CD8-positive, alpha-beta T cell (primary cell): ENCODE measurements at regions of chr12 and their contacts with region 1.

Region 1: GRCh38 chr12:107760809-107761501 is at the start of gene PRDM4:
- DNase-seq: peak; percentile 76 to 97 (median 88)
- ATAC-seq: peak; percentile 95
- H3K4me3 ChIP-seq: peak within 1 kb of the TSS; percentile 76 to 82
- H3K4me3 Mint-ChIP-seq: peak within 1 kb of the TSS; percentile 89
- H3K27ac ChIP-seq: peak within 1 kb of the TSS; percentile 80 to 83
- H3K27ac Mint-ChIP-seq: peak within 1 kb of the TSS; percentile 90
- H3K4me1 ChIP-seq: peaks cover 31% of the 10 kb centered on the region
- H3K4me1 Mint-ChIP-seq: peaks cover 44% of the 10 kb centered on the region
- H3K27me3 ChIP-seq: no peaks in the 10 kb centered on the region
- H3K27me3 Mint-ChIP-seq: no peaks in the 10 kb centered on the region
- CTCF ChIP-seq: no peak
- total RNA-seq, gene PRDM4: 44.9 to 46.0 TPM

Region 2: DNA sequence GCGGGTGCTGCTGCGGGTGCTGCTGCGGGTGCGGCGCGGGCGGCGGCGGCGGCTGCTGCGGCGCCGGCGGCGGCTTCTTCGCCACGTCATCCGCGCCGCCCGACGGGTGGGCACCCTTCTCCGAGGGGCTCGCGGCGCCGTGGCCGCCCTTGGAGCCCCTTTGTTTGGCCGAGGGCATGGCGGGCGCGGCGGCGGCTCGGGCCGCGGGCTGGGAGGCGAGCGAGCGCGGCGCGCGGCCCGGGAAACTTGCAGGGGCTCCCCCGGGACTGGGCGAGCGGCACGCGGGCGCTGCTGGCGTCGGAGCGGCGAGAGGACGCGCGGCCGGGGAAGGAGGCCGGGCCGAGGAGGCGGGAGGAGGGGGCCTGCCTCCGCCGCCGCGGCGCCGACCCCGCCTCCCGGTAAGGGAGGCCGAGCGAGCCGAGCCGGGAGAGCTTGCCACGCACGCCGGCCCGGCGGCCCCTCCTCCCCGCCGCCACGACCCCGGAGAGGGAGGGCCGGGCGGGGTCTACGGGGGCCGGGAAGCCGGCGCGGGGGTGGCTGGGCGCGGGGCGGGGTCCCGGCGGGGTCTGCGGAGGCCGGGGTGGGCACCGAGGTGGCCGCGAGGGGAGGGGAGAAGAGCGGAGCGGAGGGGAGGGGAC is 1513.2 kb before region 1 on chr12 and contains the start of gene CKAP4:
- CTCF ChIA-PET with region 1: no interaction called
- POLR2A ChIA-PET with region 1: no interaction called
- intact Hi-C with region 1: loop called in 1 of 2 experiments (anchors 5 kb)
- DNase-seq: peak; percentile 10 to 83 (median 58)
- ATAC-seq: peak; percentile 55
- H3K4me3 ChIP-seq: peak within 1 kb of the TSS; percentile 66 to 84
- H3K4me3 Mint-ChIP-seq: peak within 1 kb of the TSS; percentile 86
- H3K27ac ChIP-seq: peak within 1 kb of the TSS; percentile 72 to 73
- H3K27ac Mint-ChIP-seq: peak within 1 kb of the TSS; percentile 95
- H3K4me1 ChIP-seq: peaks cover 32% of the 10 kb centered on the region
- H3K4me1 Mint-ChIP-seq: peaks cover 35% of the 10 kb centered on the region
- H3K27me3 ChIP-seq: no peaks in the 10 kb centered on the region
- H3K27me3 Mint-ChIP-seq: no peaks in the 10 kb centered on the region
- CTCF ChIP-seq: no peak
- total RNA-seq, gene CKAP4: 19.3 to 19.7 TPM

Region 3: GRCh38 chr12:106986625-106987430 is 774.1 kb before region 1 on chr12 and contains the start of gene MTERF2:
- CTCF ChIA-PET with region 1: no interaction called
- POLR2A ChIA-PET with region 1: no interaction called
- intact Hi-C with region 1: loop called in 1 of 2 experiments (anchors 2 kb)
- DNase-seq: peak; percentile 55 to 91 (median 76)
- ATAC-seq: peak; percentile 97
- H3K4me3 ChIP-seq: peak within 1 kb of the TSS; percentile 89 to 99
- H3K4me3 Mint-ChIP-seq: peak within 1 kb of the TSS; percentile 94
- H3K27ac ChIP-seq: peak within 1 kb of the TSS; percentile 61 to 75
- H3K27ac Mint-ChIP-seq: peak within 1 kb of the TSS; percentile 85
- H3K4me1 ChIP-seq: peaks cover 16% of the 10 kb centered on the region
- H3K4me1 Mint-ChIP-seq: peaks cover 43% of the 10 kb centered on the region
- H3K27me3 ChIP-seq: no peaks in the 10 kb centered on the region
- H3K27me3 Mint-ChIP-seq: no peaks in the 10 kb centered on the region
- CTCF ChIP-seq: no peak
- total RNA-seq, gene MTERF2: 3.1 to 4.1 TPM

Region 4: GRCh38 chr12:107718606-107719005 is 42.3 kb before region 1 on chr12:
- CTCF ChIA-PET with region 1: no interaction called
- POLR2A ChIA-PET with region 1: no interaction called
- intact Hi-C with region 1: no loop called
- DNase-seq: no peak
- ATAC-seq: no peak
- H3K4me3 ChIP-seq: no peak overlapping the region
- H3K4me3 Mint-ChIP-seq: no peak overlapping the region
- H3K27ac ChIP-seq: no peak overlapping the region
- H3K27ac Mint-ChIP-seq: no peak overlapping the region
- H3K4me1 ChIP-seq: no peaks in the 10 kb centered on the region
- H3K4me1 Mint-ChIP-seq: no peaks in the 10 kb centered on the region
- H3K27me3 ChIP-seq: no peaks in the 10 kb centered on the region
- H3K27me3 Mint-ChIP-seq: no peaks in the 10 kb centered on the region
- CTCF ChIP-seq: no peak

Region 5: GRCh38 chr12:107884769-107885694 is 124.1 kb after region 1 on chr12:
- CTCF ChIA-PET with region 1: no interaction called
- POLR2A ChIA-PET with region 1: no interaction called
- intact Hi-C with region 1: loop called (anchors 2 to 5 kb)
- DNase-seq: peak in 6 of 9 experiments; percentile 13 to 61 (median 27)
- ATAC-seq: peak; percentile 49
- H3K4me3 ChIP-seq: no peak overlapping the region
- H3K4me3 Mint-ChIP-seq: no peak overlapping the region
- H3K27ac ChIP-seq: no peak overlapping the region
- H3K27ac Mint-ChIP-seq: no peak overlapping the region
- H3K4me1 ChIP-seq: no peaks in the 10 kb centered on the region
- H3K4me1 Mint-ChIP-seq: no peaks in the 10 kb centered on the region
- H3K27me3 ChIP-seq: peaks cover 0 to 3% of the 10 kb centered on the region in 2 experiments
- H3K27me3 Mint-ChIP-seq: peaks cover 22% of the 10 kb centered on the region
- CTCF ChIP-seq: peak; percentile 52

Region 6: DNA sequence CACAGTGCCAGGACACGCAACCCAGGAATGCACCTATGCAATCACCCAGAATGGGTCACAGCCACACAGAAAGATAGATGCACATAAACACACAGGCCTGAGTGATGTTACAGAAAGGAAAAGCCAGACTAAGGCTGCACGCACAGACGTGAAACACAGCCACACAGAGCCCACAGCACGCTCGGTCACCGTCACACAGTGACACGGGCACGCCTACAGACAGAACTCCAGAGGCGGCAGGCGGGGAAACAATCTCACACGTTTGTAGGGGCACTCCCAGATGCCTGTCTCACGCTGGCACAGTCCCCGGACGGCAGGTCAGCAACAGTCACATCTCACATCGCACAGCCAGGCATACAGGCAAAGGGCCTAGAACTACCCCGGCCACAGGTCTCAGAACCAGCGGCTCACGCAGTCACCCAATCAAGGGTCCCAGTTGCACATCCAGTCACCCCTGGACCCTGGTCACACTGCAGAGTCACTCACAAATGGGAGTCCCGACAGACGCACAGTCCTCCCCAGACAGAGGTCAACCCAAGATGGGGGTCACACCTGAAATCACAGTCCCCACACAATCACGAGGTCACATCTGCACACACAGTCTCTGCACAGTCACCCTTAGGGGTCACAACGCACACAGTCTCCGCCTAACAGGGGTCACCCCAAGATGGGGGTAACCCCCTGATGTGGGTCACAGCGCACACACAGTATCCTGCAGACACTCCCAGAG is 1095.6 kb after region 1 on chr12:
- CTCF ChIA-PET with region 1: no interaction called
- POLR2A ChIA-PET with region 1: no interaction called
- intact Hi-C with region 1: loop called (anchors 2 to 5 kb)
- DNase-seq: peak; percentile 27 to 92 (median 64)
- ATAC-seq: peak; percentile 70
- H3K4me3 ChIP-seq: peak overlapping the region; percentile 58 to 71
- H3K4me3 Mint-ChIP-seq: peak overlapping the region; percentile 98
- H3K27ac ChIP-seq: peak overlapping the region; percentile 54 to 77
- H3K27ac Mint-ChIP-seq: peak overlapping the region; percentile 97
- H3K4me1 ChIP-seq: peaks cover 27% of the 10 kb centered on the region
- H3K4me1 Mint-ChIP-seq: peaks cover 46% of the 10 kb centered on the region
- H3K27me3 ChIP-seq: peaks cover 0 to 2% of the 10 kb centered on the region in 2 experiments
- H3K27me3 Mint-ChIP-seq: no peaks in the 10 kb centered on the region
- CTCF ChIP-seq: no peak

Region 7: GRCh38 chr12:109477185-109477962 is 1716.4 kb after region 1 on chr12 and contains the starts of genes KCTD10 and UBE3B:
- CTCF ChIA-PET with region 1: no interaction called
- POLR2A ChIA-PET with region 1: no interaction called
- intact Hi-C with region 1: loop called in 1 of 2 experiments (anchors 5 kb)
- DNase-seq: peak; percentile 73 to 94 (median 86)
- ATAC-seq: peak; percentile 90
- H3K4me3 ChIP-seq: peak within 1 kb of the TSS; percentile 92 to 94
- H3K4me3 Mint-ChIP-seq: peak within 1 kb of the TSS; percentile 97
- H3K27ac ChIP-seq: peak within 1 kb of the TSS; percentile 76 to 94
- H3K27ac Mint-ChIP-seq: peak within 1 kb of the TSS; percentile 98
- H3K4me1 ChIP-seq: peaks cover 35% of the 10 kb centered on the region
- H3K4me1 Mint-ChIP-seq: peaks cover 51% of the 10 kb centered on the region
- H3K27me3 ChIP-seq: no peaks in the 10 kb centered on the region
- H3K27me3 Mint-ChIP-seq: no peaks in the 10 kb centered on the region
- CTCF ChIP-seq: no peak
- total RNA-seq, gene KCTD10: 26.2 to 31.3 TPM
- total RNA-seq, gene UBE3B: 16.5 to 17.8 TPM